Left lung (tissue), 14 donors: ENCODE measurements at regions of chr9 and their contacts with region 1.

Region 1: DNA sequence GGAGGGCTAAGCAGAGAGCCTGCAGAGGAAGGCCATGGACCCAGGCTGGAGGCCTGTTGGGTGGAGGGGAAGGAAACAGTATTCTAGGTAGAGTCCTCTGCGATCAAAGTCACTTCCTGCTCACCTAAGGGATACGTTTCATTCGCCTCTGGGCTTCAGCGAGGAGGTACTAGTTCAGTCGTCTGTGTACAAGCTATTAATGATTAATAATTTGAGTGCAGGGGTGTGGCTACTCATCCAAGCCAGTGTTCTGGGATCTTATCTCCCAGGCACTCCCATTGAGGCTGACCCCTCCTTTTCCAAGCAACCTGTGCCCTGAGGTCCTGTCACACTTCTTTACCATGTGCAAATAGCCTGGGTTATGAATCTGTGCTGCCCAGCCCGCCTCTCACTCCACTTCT is 25.2 kb downstream of the RALGPS1 start:
- DNase-seq: peak in 2 of 4 donors; percentile 58 to 71
- ATAC-seq: peak; percentile 92
- H3K4me3 ChIP-seq: no peak overlapping the region
- H3K27ac ChIP-seq: peak overlapping the region; percentile 55 to 60
- H3K4me1 ChIP-seq: peaks cover 0 to 7% of the 10 kb centered on the region in 2 donors
- H3K27me3 ChIP-seq: no peaks in the 10 kb centered on the region
- CTCF ChIP-seq: no peak

Region 2: DNA sequence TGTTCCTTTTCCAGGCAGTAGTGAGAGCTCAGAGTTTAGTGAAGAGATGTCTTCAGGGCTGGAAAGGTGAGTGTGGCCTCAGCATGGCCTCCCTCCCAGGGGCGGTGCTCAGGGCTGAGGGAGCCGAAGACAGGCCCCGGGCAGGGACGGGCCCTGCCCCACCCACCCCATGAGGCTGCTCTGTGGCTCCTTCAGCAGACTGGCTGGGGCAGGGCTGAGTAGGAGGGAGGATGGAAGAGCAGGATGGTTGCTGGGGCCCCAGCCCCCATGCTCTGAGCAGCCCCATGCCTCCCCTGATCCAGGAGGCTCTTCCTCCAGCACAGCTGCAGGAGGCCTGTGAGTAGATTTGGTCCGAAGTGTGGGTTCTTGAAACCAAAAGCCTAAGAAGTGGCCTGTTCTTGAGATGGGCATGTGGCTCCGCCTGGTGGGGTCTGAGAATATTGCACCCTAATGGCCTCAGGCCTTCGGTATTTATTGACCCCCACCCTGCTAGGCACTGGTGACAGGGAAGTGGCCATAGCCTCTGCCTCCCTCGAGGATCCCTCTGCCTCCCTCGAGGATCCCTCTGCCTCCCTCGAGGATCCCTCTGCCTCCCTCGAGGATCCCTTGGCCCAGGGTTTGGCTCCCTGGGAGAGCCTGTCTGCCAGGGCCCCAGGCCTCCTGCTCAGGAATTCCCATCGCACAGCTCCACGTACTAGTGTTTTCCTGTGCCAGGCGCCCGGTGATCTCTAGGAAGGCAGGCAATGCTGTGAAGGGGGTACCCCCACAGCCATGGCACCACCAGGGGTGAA is 259.4 kb after region 1 on chr9:
- intact Hi-C with region 1: loop called (anchors 5 to 10 kb)
- DNase-seq: peak in 3 of 4 donors; percentile 54 to 88 (median 79)
- ATAC-seq: peak; percentile 93
- H3K4me3 ChIP-seq: no peak overlapping the region
- H3K27ac ChIP-seq: no peak overlapping the region
- H3K4me1 ChIP-seq: peaks cover 0 to 7% of the 10 kb centered on the region in 2 donors
- H3K27me3 ChIP-seq: no peaks in the 10 kb centered on the region
- CTCF ChIP-seq: peak; percentile 77 to 81

Region 3: DNA sequence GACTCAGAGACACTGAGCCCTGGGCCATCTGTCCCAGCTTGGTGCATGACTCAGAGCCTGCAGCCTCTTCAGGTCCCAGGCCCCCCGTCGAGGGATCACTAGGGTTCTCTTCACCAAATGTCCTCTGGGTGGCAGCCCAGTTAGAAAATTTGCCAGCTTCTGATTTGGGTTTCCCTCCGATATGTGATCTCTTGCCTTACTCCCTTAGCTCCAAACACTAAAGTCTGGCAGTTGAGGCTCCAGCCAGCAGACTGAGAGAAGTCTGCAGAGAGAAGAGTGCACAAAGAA is 265.3 kb after region 1 on chr9:
- intact Hi-C with region 1: loop called in 1 of 2 experiments (anchors 10 kb)
- DNase-seq: peak in 1 of 4 donors; percentile 27
- ATAC-seq: no peak
- H3K4me3 ChIP-seq: no peak overlapping the region
- H3K27ac ChIP-seq: no peak overlapping the region
- H3K4me1 ChIP-seq: no peaks in the 10 kb centered on the region
- H3K27me3 ChIP-seq: no peaks in the 10 kb centered on the region
- CTCF ChIP-seq: no peak